ENCODE measurements at regions of chrX and their contacts with region 1.

Region 1: DNA sequence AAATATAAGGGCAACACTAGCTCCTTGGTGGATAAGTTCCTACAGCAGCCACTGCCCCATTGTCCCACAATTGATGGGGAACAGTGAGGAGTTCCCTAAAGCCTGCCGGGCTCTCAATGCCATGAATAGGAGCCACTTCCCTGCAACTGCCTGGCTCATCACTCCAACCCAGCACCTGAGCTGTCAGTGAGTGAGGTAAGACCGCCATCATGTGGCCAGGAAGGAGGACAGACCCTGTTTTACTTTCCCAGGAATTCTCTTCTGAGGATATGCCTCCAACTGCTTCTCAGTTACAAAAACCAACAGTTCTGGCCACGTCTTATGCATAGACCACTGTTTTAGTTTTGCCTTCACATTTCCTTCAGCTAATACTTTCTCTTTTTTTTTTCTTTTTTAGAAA is 45.5 kb downstream of the SRPX start:
- H3K4me3 ChIP-seq: no peak overlapping the region
- H3K27ac ChIP-seq: no peak overlapping the region
- H3K4me1 ChIP-seq: no peaks in the 10 kb centered on the region
- CTCF ChIP-seq: peak; percentile 90

Region 2: GRCh38 chrX:37745354-37745753 is 429.8 kb before region 1 on chrX:
- CTCF ChIA-PET with region 1: interaction called, 31 read pairs
- POLR2A ChIA-PET with region 1: no interaction called
- H3K4me3 ChIP-seq: no peak overlapping the region
- H3K27ac ChIP-seq: no peak overlapping the region
- H3K4me1 ChIP-seq: no peaks in the 10 kb centered on the region
- CTCF ChIP-seq: peak; percentile 59

Region 3: GRCh38 chrX:37926700-37927099 is 248.4 kb before region 1 on chrX:
- CTCF ChIA-PET with region 1: interaction called, 75 read pairs
- POLR2A ChIA-PET with region 1: no interaction called
- H3K4me3 ChIP-seq: no peak overlapping the region
- H3K27ac ChIP-seq: no peak overlapping the region
- H3K4me1 ChIP-seq: no peaks in the 10 kb centered on the region
- CTCF ChIP-seq: no peak

Region 4: DNA sequence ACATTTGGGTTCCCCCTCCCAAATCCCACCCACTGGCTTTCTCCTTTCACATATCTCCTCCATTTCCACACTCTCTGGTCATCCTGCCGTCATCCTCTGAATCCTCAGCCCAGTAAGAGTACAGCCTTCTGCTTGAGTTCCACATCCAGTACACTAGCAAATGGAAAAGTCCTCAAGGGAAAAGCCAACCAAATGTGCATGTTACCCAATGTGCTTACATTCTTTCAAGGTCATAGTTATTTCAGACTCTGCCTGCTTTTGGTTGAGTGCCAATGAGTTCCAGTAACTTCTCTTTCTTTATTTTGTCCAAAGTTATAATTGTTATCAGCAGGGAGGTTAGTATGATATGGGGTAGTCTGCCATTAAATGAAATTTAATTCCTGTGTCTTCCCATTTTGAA is 32.5 kb before region 1 on chrX:
- CTCF ChIA-PET with region 1: no interaction called
- POLR2A ChIA-PET with region 1: no interaction called
- H3K4me3 ChIP-seq: no peak overlapping the region
- H3K27ac ChIP-seq: no peak overlapping the region
- H3K4me1 ChIP-seq: no peaks in the 10 kb centered on the region
- CTCF ChIP-seq: no peak

Region 5: GRCh38 chrX:38232079-38232686 is 57.0 kb after region 1 on chrX:
- CTCF ChIA-PET with region 1: no interaction called
- POLR2A ChIA-PET with region 1: no interaction called
- H3K4me3 ChIP-seq: no peak overlapping the region
- H3K27ac ChIP-seq: no peak overlapping the region
- H3K4me1 ChIP-seq: no peaks in the 10 kb centered on the region
- CTCF ChIP-seq: no peak

Region 6: DNA sequence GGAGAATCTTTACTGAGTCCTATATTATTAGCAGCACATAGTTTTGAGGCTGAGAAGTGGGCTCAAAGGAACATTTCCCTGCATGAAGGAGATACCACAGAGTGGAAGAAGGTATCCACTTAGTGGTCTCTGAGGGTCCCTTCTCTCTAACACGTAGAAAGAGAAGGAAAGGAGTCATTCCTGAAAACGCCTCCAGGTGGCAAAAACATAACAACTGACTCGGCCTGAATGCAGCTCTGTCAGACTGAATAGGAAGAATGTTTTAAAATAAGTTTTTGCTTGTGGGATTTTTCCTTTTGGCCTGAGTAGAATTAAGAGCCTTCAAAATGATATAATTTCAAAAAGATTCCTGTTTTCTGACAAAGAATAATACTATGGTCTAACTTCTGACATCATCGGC is 128.9 kb after region 1 on chrX:
- CTCF ChIA-PET with region 1: no interaction called
- POLR2A ChIA-PET with region 1: no interaction called
- H3K4me3 ChIP-seq: no peak overlapping the region
- H3K27ac ChIP-seq: no peak overlapping the region
- H3K4me1 ChIP-seq: no peaks in the 10 kb centered on the region
- CTCF ChIP-seq: no peak

Region 7: GRCh38 chrX:38335382-38335781 is 160.2 kb after region 1 on chrX:
- CTCF ChIA-PET with region 1: no interaction called
- POLR2A ChIA-PET with region 1: no interaction called
- H3K4me3 ChIP-seq: no peak overlapping the region
- H3K27ac ChIP-seq: no peak overlapping the region
- H3K4me1 ChIP-seq: no peaks in the 10 kb centered on the region
- CTCF ChIP-seq: no peak

Measured in HEK293 (cell line).